Caco-2 (cell line): ENCODE measurements at regions of chr9 and their contacts with region 1.

Region 1: GRCh38 chr9:114906908-114907571 is 23.4 kb downstream of the TNFSF8 start:
- DNase-seq: peak; percentile 66 to 79
- H3K4me3 ChIP-seq: no peak overlapping the region
- H3K4me3 Mint-ChIP-seq: no peak overlapping the region
- H3K27ac Mint-ChIP-seq: peak overlapping the region; percentile 92
- H3K4me1 ChIP-seq: peaks cover 35% of the 10 kb centered on the region
- H3K4me1 Mint-ChIP-seq: peaks cover 34% of the 10 kb centered on the region
- H3K27me3 ChIP-seq: no peaks in the 10 kb centered on the region
- H3K27me3 Mint-ChIP-seq: no peaks in the 10 kb centered on the region
- CTCF ChIP-seq: peak; percentile 63 to 71

Region 2: GRCh38 chr9:114505187-114506081 is 401.6 kb before region 1 on chr9 and contains the start of gene WHRN:
- CTCF ChIA-PET with region 1: no interaction called
- POLR2A ChIA-PET with region 1: no interaction called
- intact Hi-C with region 1: loop called (anchors 5 kb)
- DNase-seq: peak; percentile 94 to 95
- H3K4me3 ChIP-seq: peak within 1 kb of the TSS; percentile 45
- H3K4me3 Mint-ChIP-seq: peak within 1 kb of the TSS; percentile 88
- H3K27ac Mint-ChIP-seq: peak within 1 kb of the TSS; percentile 95
- H3K4me1 ChIP-seq: peaks cover 4% of the 10 kb centered on the region; the same call in 1 of the 2 replicates
- H3K4me1 Mint-ChIP-seq: peaks cover 12% of the 10 kb centered on the region
- H3K27me3 ChIP-seq: peaks cover 1% of the 10 kb centered on the region; the same call in 1 of the 2 replicates
- H3K27me3 Mint-ChIP-seq: peaks cover 24% of the 10 kb centered on the region
- CTCF ChIP-seq: no peak
- total RNA-seq, gene WHRN: 1.4 and 1.6 TPM in 2 replicates

Region 3: GRCh38 chr9:114721491-114722079 is 185.5 kb before region 1 on chr9:
- CTCF ChIA-PET with region 1: no interaction called
- POLR2A ChIA-PET with region 1: no interaction called
- intact Hi-C with region 1: loop called (anchors 1 kb)
- DNase-seq: peak; percentile 75 to 80
- H3K4me3 ChIP-seq: no peak overlapping the region
- H3K4me3 Mint-ChIP-seq: peak overlapping the region; percentile 47
- H3K27ac Mint-ChIP-seq: peak overlapping the region; percentile 71
- H3K4me1 ChIP-seq: peaks cover 10% of the 10 kb centered on the region; the same call in 1 of the 2 replicates
- H3K4me1 Mint-ChIP-seq: peaks cover 7% of the 10 kb centered on the region
- H3K27me3 ChIP-seq: no peaks in the 10 kb centered on the region; the same call in 1 of the 2 replicates
- H3K27me3 Mint-ChIP-seq: peaks cover 2% of the 10 kb centered on the region
- CTCF ChIP-seq: peak in 1 of 2 experiments; percentile 29

Region 4: GRCh38 chr9:114799441-114799840 is 107.6 kb before region 1 on chr9:
- CTCF ChIA-PET with region 1: interaction called, 7 read pairs
- POLR2A ChIA-PET with region 1: no interaction called
- intact Hi-C with region 1: loop called (anchors 1 kb)
- DNase-seq: peak; percentile 77 to 88
- H3K4me3 ChIP-seq: no peak overlapping the region
- H3K4me3 Mint-ChIP-seq: no peak overlapping the region
- H3K27ac Mint-ChIP-seq: no peak overlapping the region
- H3K4me1 ChIP-seq: peaks cover 37% of the 10 kb centered on the region
- H3K4me1 Mint-ChIP-seq: peaks cover 34% of the 10 kb centered on the region
- H3K27me3 ChIP-seq: no peaks in the 10 kb centered on the region
- H3K27me3 Mint-ChIP-seq: peaks cover 5% of the 10 kb centered on the region
- CTCF ChIP-seq: no peak

Region 5: GRCh38 chr9:114884787-114885452 is 22.1 kb before region 1 on chr9:
- CTCF ChIA-PET with region 1: interaction called, 5 read pairs
- POLR2A ChIA-PET with region 1: no interaction called
- intact Hi-C with region 1: loop called (anchors 1 kb)
- DNase-seq: peak; percentile 59 to 65
- H3K4me3 ChIP-seq: no peak overlapping the region
- H3K4me3 Mint-ChIP-seq: peak overlapping the region; percentile 15
- H3K27ac Mint-ChIP-seq: peak overlapping the region; percentile 40
- H3K4me1 ChIP-seq: peaks cover 20% of the 10 kb centered on the region
- H3K4me1 Mint-ChIP-seq: peaks cover 13% of the 10 kb centered on the region
- H3K27me3 ChIP-seq: no peaks in the 10 kb centered on the region
- H3K27me3 Mint-ChIP-seq: no peaks in the 10 kb centered on the region
- CTCF ChIP-seq: no peak

Region 6: DNA sequence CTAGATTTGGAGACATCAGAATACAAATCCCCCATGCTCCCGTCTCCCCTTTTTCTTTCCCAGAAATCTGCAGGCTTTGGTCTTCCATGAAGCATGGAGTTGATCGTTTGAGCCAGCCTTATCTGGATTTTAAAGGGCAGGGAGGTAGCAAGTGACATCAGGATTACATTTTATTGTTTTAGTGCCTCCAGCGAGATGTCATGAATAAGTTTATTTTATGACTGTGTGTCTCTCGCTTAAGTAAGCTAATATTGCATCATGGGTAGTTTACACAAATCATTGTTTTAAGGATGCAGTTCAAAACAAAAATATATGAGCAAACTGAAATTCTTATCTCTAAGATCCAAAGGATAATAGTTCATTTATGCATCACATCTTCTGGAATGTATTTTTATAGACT is 74.0 kb after region 1 on chr9:
- CTCF ChIA-PET with region 1: interaction called, 5 read pairs
- POLR2A ChIA-PET with region 1: no interaction called
- intact Hi-C with region 1: loop called (anchors 1 kb)
- DNase-seq: peak; percentile 41 to 44
- H3K4me3 ChIP-seq: no peak overlapping the region
- H3K4me3 Mint-ChIP-seq: no peak overlapping the region
- H3K27ac Mint-ChIP-seq: no peak overlapping the region
- H3K4me1 ChIP-seq: peaks cover 3% of the 10 kb centered on the region; the same call in 1 of the 2 replicates
- H3K4me1 Mint-ChIP-seq: no peaks in the 10 kb centered on the region
- H3K27me3 ChIP-seq: no peaks in the 10 kb centered on the region
- H3K27me3 Mint-ChIP-seq: peaks cover 5% of the 10 kb centered on the region
- CTCF ChIP-seq: no peak

Region 7: GRCh38 chr9:115524453-115525059 is 617.5 kb after region 1 on chr9:
- CTCF ChIA-PET with region 1: no interaction called
- POLR2A ChIA-PET with region 1: no interaction called
- intact Hi-C with region 1: loop called (anchors 2 kb)
- DNase-seq: peak in 1 of 2 experiments; percentile 64
- H3K4me3 ChIP-seq: no peak overlapping the region
- H3K4me3 Mint-ChIP-seq: no peak overlapping the region
- H3K27ac Mint-ChIP-seq: no peak overlapping the region
- H3K4me1 ChIP-seq: no peaks in the 10 kb centered on the region; the same call in 1 of the 2 replicates
- H3K4me1 Mint-ChIP-seq: no peaks in the 10 kb centered on the region
- H3K27me3 ChIP-seq: no peaks in the 10 kb centered on the region
- H3K27me3 Mint-ChIP-seq: peaks cover 6% of the 10 kb centered on the region
- CTCF ChIP-seq: peak; percentile 62 to 68